Right lobe of liver (tissue), 6 donors: ENCODE measurements at regions of chr15 and their contacts with region 1.

Region 1: GRCh38 chr15:100650685-100651084 is 48.3 kb downstream of the ASB7 start:
- DNase-seq: no peak
- ATAC-seq: peak in 1 of 4 donors; percentile 56
- H3K4me3 ChIP-seq: no peak overlapping the region
- H3K27ac ChIP-seq: no peak overlapping the region
- H3K4me1 ChIP-seq: no peaks in the 10 kb centered on the region
- H3K27me3 ChIP-seq: no peaks in the 10 kb centered on the region
- CTCF ChIP-seq: peak in 3 of 4 donors; percentile 29 to 36 (median 33)
- POLR2A ChIP-seq: no peak

Region 2: GRCh38 chr15:100781061-100781960 is 130.6 kb after region 1 on chr15:
- intact Hi-C with region 1: loop called in 1 of 2 experiments (anchors 10 kb)
- DNase-seq: peak in 1 of 3 donors; percentile 28
- ATAC-seq: no peak
- H3K4me3 ChIP-seq: no peak overlapping the region
- H3K27ac ChIP-seq: no peak overlapping the region
- H3K4me1 ChIP-seq: no peaks in the 10 kb centered on the region
- H3K27me3 ChIP-seq: no peaks in the 10 kb centered on the region
- CTCF ChIP-seq: no peak
- POLR2A ChIP-seq: no peak